Colonic mucosa (tissue), 4 donors: ENCODE measurements at regions of chr3 and their contacts with region 1.

Region 1: DNA sequence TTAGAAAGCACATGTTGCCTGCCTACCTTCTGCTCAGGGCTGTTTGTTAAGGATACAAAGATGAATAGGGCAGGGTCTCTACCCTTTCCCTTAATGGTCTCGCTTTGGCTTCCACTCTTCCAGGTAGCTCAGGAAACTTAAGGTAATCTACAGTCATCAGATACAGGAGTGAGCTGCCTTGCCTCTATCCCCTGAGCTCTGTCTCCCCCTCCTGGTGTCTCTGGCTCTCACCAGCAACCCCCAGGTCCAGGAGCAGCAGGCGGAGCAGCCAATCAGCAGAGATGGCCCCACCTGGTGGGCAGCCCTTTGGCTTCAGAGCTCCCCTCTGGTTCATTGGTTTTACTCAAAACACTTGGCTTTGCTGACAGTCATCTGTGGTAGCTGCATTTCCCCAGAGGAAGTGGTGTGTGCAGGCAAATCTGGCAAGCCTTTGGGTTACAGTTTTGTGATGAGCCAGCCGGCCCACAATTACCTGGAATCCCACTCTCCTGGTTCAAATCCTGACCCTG is 8.5 kb upstream of the CX3CR1 start:
- DNase-seq: peak; percentile 84
- H3K4me3 ChIP-seq: no peak overlapping the region
- H3K27ac ChIP-seq: no peak overlapping the region
- H3K4me1 ChIP-seq: no peaks in the 10 kb centered on the region
- H3K27me3 ChIP-seq: no peaks in the 10 kb centered on the region
- CTCF ChIP-seq: peak; percentile 81

Region 2: DNA sequence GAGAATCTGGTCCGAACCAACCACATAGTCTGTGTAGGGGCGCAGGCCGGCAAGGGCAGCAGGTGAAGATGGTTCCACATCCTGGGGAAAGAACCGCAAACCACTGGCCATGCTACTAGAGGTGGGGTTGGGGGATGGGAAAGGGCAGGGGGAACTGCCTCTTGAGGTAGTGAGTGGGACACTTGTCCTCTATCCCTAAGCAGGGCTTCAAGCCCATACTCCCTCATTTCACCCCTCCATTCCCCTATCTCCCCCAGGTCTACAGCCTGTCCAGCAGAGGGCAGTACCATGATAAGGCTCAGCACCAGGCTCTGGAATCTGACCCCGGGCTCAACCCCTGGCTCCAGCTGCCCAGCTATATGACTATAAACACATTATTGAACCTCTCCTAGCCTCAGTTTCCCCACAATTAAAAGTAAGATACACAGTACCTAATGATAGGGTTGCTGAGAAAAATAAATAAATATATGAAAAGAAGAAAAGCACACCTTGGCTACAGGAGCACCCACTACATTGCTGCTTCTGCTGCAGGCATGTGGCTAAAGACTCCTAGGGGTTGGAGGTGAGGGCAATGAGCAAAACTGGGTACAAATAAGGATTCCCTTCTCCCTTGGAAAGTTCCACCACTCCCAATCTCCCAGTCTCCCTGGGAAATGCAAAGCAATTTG is 187.2 kb before region 1 on chr3:
- intact Hi-C with region 1: loop called (anchors 5 kb)
- DNase-seq: peak; percentile 39
- H3K4me3 ChIP-seq: no peak overlapping the region
- H3K27ac ChIP-seq: no peak overlapping the region
- H3K4me1 ChIP-seq: no peaks in the 10 kb centered on the region
- H3K27me3 ChIP-seq: no peaks in the 10 kb centered on the region
- CTCF ChIP-seq: peak; percentile 58

Region 3: GRCh38 chr3:39126532-39127071 is 161.8 kb before region 1 on chr3:
- intact Hi-C with region 1: loop called (anchors 5 kb)
- DNase-seq: peak; percentile 71
- H3K4me3 ChIP-seq: no peak overlapping the region
- H3K27ac ChIP-seq: no peak overlapping the region
- H3K4me1 ChIP-seq: peaks cover 5% of the 10 kb centered on the region
- H3K27me3 ChIP-seq: no peaks in the 10 kb centered on the region
- CTCF ChIP-seq: peak; percentile 26

Region 4: GRCh38 chr3:39189959-39190269 is 98.4 kb before region 1 on chr3:
- intact Hi-C with region 1: loop called (anchors 2 kb)
- DNase-seq: peak; percentile 70
- H3K4me3 ChIP-seq: no peak overlapping the region
- H3K27ac ChIP-seq: no peak overlapping the region
- H3K4me1 ChIP-seq: no peaks in the 10 kb centered on the region
- H3K27me3 ChIP-seq: no peaks in the 10 kb centered on the region
- CTCF ChIP-seq: peak; percentile 9

Region 5: GRCh38 chr3:39208463-39209055 is 79.8 kb before region 1 on chr3:
- intact Hi-C with region 1: loop called (anchors 5 kb)
- DNase-seq: peak; percentile 73
- H3K4me3 ChIP-seq: no peak overlapping the region
- H3K27ac ChIP-seq: no peak overlapping the region
- H3K4me1 ChIP-seq: no peaks in the 10 kb centered on the region
- H3K27me3 ChIP-seq: no peaks in the 10 kb centered on the region
- CTCF ChIP-seq: peak; percentile 40

Region 6: GRCh38 chr3:39346785-39347585 is 58.6 kb after region 1 on chr3:
- intact Hi-C with region 1: no loop called
- DNase-seq: no peak
- H3K4me3 ChIP-seq: no peak overlapping the region
- H3K27ac ChIP-seq: peak overlapping the region; percentile 54
- H3K4me1 ChIP-seq: peaks cover 11% of the 10 kb centered on the region
- H3K27me3 ChIP-seq: no peaks in the 10 kb centered on the region
- CTCF ChIP-seq: no peak

Region 7: DNA sequence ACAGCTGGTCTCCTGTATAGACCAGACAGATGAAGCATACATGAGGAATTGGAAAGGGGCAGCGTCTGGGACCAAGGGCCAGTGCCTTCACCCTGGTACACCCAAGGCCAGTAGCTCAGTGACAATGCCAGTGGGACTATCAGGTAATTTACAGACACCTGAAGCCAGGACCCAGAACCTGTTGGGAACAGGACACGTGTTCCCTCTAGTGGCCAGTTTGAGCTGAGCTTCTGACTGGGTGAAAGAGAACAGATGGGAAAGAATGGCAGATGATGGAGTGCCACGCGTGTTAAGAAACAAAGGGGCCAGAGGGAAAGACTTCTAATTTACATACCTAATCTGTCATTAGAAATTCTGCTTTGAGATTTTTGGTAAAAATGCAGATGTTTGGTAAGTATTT is 89.7 kb after region 1 on chr3:
- intact Hi-C with region 1: loop called (anchors 2 kb)
- DNase-seq: peak; percentile 84
- H3K4me3 ChIP-seq: no peak overlapping the region
- H3K27ac ChIP-seq: no peak overlapping the region
- H3K4me1 ChIP-seq: no peaks in the 10 kb centered on the region
- H3K27me3 ChIP-seq: no peaks in the 10 kb centered on the region
- CTCF ChIP-seq: peak; percentile 65

Region 8: DNA sequence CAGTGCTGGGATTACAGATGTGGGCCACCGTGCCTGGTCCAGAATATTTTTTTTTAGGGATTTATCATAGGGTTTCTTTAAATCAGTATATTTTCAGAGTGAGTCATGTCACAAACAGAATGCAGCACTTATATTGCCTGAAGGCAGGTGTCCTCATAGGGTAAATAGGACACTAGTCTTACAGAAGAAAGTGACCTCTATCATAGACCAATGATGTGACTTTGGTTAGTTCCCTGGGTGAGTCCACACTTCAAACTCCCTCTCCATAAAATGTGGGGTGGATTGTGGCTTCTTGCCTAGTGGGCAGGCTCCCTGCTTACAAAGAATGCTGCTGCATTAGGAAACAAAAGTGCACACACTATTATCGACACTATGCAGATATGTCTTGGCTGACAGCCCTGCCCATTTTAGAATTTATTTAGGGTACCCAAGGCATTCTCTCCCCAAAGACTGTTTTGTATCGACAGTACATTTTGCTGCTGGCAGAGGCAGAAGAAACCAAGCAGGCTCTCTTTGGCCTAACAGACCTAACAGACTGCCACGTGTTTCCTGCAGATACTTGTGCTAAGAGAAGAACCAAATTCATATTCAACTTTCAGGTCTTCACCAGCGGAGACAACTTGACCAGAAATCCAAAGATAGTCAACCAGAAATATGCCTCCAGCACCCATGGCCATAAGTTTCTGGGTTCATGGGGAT is 304.1 kb after region 1 on chr3:
- intact Hi-C with region 1: no loop called
- DNase-seq: no peak
- H3K4me3 ChIP-seq: no peak overlapping the region
- H3K27ac ChIP-seq: no peak overlapping the region
- H3K4me1 ChIP-seq: no peaks in the 10 kb centered on the region
- H3K27me3 ChIP-seq: no peaks in the 10 kb centered on the region
- CTCF ChIP-seq: no peak